Mucosa of descending colon (tissue), 3 donors: ENCODE measurements at regions of chr1 and their contacts with region 1.

Region 1: GRCh38 chr1:2194898-2195673 is 514 bp upstream of the FAAP20 start:
- DNase-seq: peak; percentile 92 to 95 (median 94)
- ATAC-seq: peak; percentile 77
- H3K4me3 ChIP-seq: peak overlapping the region; percentile 26
- H3K4me1 ChIP-seq: peaks cover 42% of the 10 kb centered on the region
- CTCF ChIP-seq: peak; percentile 85

Region 2: GRCh38 chr1:1959840-1960479 is 235.1 kb before region 1 on chr1:
- intact Hi-C with region 1: no loop called
- DNase-seq: peak; percentile 75 to 87 (median 87)
- ATAC-seq: peak; percentile 86
- H3K4me3 ChIP-seq: no peak overlapping the region
- H3K4me1 ChIP-seq: no peaks in the 10 kb centered on the region
- CTCF ChIP-seq: peak; percentile 62

Region 3: DNA sequence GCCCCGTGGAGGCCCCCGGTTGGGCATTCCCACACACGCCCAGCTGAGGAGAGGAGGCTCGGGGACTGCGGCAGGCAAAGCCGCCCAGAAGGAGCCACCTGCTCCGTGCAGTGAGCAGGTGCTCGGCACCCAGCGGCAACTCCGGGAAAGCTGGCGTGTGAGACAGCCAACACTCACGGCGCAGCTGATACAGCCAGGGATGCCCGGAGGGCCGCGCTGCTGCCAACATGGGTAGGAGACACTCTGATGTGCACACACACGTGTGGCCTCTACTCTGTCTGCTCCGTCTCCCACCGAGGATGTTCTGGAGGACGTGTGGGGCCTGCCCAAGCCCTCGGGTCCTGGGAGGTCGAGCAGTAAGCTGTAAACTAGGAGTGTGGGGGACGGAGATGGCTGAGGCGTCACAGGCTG is 183.4 kb after region 1 on chr1:
- intact Hi-C with region 1: loop called in 1 of 2 experiments (anchors 5 kb)
- DNase-seq: peak in 2 of 3 donors; percentile 20 to 44
- ATAC-seq: no peak
- H3K4me3 ChIP-seq: no peak overlapping the region
- H3K4me1 ChIP-seq: no peaks in the 10 kb centered on the region
- CTCF ChIP-seq: no peak